ENCODE measurements at regions of chr19 and their contacts with region 1.

Region 1: DNA sequence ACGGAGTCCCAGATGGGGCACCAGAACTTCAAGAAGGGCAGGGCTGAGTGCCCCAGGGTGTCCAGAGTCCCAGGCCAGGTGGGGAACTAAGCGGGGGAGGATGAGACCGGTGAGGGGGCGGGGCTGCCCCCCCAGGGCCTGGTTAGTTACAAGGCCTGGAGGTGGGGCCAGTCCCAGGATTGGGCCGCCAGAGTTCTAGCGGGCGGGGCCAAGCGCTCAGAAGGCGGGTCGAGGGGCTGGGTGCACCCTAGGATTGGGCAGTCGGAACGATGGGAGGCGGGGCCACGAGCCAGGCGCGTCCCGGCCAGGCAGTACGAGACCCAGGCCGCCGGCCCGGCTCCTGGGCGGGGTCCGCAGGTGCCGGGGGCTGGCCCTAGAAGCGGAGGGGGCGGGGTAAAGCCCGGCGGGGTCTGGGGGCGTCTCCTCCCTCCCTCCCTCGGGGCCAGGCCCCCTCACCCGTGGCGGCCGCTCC is 571 bp downstream of the ZNF653 start:
- DNase-seq: peak; percentile 93 to 98
- H3K4me3 ChIP-seq: peak overlapping the region; percentile 84 to 94
- H3K27ac ChIP-seq: peak overlapping the region; percentile 95 to 97
- H3K4me1 ChIP-seq: peaks cover 2 to 6% of the 10 kb centered on the region in 2 donors
- H3K27me3 ChIP-seq: no peaks in the 10 kb centered on the region
- CTCF ChIP-seq: no peak

Region 2: GRCh38 chr19:11528551-11529341 is 23.7 kb after region 1 on chr19 and contains the start of gene ECSIT:
- intact Hi-C with region 1: loop called (anchors 1 kb)
- DNase-seq: peak; percentile 94 to 100
- H3K4me3 ChIP-seq: peak within 1 kb of the TSS; percentile 57 to 73
- H3K27ac ChIP-seq: peak within 1 kb of the TSS; percentile 92 to 94
- H3K4me1 ChIP-seq: peaks cover 6 to 12% of the 10 kb centered on the region in 2 donors
- H3K27me3 ChIP-seq: no peaks in the 10 kb centered on the region
- CTCF ChIP-seq: peak in 1 of 3 experiments; percentile 16
- total RNA-seq, gene ECSIT: 27.5 TPM

Region 3: DNA sequence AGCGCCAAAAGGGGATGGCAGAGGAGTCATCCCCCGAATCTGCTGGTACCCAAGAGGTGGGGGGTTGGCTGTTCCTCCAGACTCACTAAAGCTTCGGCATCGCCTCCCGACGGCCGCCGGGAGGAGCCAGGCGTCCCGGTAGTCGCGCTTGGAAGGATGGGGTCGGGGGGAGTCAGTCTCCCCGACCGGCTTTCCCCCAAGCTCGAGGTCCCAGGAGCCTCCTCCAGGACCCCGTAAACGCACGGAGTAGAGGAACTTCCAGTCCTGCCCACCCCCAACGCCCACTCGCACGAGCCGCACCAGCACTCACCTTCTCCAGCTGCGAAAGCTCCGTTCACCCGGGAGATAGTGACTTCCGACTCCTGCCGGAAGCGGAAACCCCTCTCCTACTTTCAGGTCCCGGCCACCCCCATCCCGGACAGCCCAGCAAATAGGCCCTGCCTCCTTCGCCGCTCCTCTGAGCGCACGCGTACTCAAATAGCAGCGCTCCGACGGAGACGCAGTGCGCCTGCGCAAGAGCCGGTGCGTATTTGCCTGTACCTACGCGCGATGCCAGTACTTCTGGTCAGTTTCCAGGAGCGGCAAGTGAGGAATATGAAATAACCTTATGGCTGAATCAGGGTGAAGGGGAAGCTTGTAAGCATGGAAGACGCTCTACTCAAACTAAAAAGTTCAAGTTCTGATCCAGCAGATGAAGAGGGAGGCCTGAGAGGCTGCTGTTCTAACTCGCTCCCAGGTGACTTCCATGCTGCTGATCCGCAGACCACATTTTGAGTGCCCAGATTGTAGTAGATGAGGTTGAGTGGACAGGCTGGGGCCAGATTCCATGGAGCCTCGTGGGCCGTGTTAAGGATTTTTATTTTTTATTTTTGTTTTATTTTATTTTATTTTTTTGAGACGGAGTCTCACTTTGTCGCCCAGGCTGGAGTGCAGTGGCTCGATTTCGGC is 54.1 kb after region 1 on chr19 and contains the start of gene ELOF1:
- intact Hi-C with region 1: no loop called
- DNase-seq: peak; percentile 93 to 98
- H3K4me3 ChIP-seq: peak within 1 kb of the TSS; percentile 56 to 76
- H3K27ac ChIP-seq: peak within 1 kb of the TSS; percentile 62 to 64
- H3K4me1 ChIP-seq: peaks cover 7 to 25% of the 10 kb centered on the region in 2 donors
- H3K27me3 ChIP-seq: no peaks in the 10 kb centered on the region
- CTCF ChIP-seq: peak in 2 of 3 experiments; percentile 10 to 24
- total RNA-seq, gene ELOF1: 28.9 TPM

Region 4: GRCh38 chr19:11597202-11598102 is 92.4 kb after region 1 on chr19 and contains the start of gene ZNF627:
- intact Hi-C with region 1: loop called (anchors 1 kb)
- DNase-seq: peak; percentile 99 to 100
- H3K4me3 ChIP-seq: peak within 1 kb of the TSS; percentile 73 to 100
- H3K27ac ChIP-seq: peak within 1 kb of the TSS; percentile 79 to 81
- H3K4me1 ChIP-seq: peaks cover 3 to 15% of the 10 kb centered on the region in 2 donors
- H3K27me3 ChIP-seq: no peaks in the 10 kb centered on the region
- CTCF ChIP-seq: peak in 2 of 3 experiments; percentile 13 to 38
- total RNA-seq, gene ZNF627: 7.6 TPM

Region 5: GRCh38 chr19:11639602-11640471 is 134.8 kb after region 1 on chr19:
- intact Hi-C with region 1: no loop called
- DNase-seq: peak; percentile 83 to 96
- H3K4me3 ChIP-seq: peak overlapping the region; percentile 70 to 79
- H3K27ac ChIP-seq: no peak overlapping the region
- H3K4me1 ChIP-seq: peaks cover 0 to 7% of the 10 kb centered on the region in 2 donors
- H3K27me3 ChIP-seq: no peaks in the 10 kb centered on the region
- CTCF ChIP-seq: no peak

Measured in ascending aorta (tissue), 2 donors.